Dorsolateral prefrontal cortex (tissue), 120 donors: ENCODE measurements at regions of chr7 and their contacts with region 1.

Region 1: GRCh38 chr7:34823640-34824258 is 165.7 kb downstream of the NPSR1 start:
- DNase-seq: peak in 9 of 10 donors; percentile 38 to 70 (median 60)
- H3K4me3 ChIP-seq: no peak overlapping the region
- H3K27ac ChIP-seq: no peak overlapping the region
- H3K27me3 ChIP-seq: no peaks in the 10 kb centered on the region
- CTCF ChIP-seq: peak; percentile 73 to 97 (median 90)

Region 2: DNA sequence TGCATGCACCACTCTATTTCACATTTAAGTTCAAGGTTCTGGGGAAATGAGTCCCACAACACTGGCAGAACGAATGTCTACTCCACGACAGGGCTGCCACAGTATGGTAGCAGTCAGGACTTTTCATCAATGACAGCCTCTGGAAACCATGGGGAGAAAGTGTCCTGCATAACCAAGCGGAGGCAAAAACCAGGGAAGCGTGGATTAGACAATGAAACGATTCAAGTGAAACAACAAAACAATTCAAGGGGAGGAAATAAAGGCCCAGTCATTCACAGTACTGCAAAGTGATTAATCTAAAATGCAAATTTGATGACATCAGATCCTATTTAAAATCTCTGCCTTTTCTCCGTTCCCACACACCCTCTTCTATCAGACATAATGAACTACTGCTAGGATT is 45.3 kb after region 1 on chr7:
- intact Hi-C with region 1: loop called in 1 of 2 experiments (anchors 2 kb)
- DNase-seq: peak in 4 of 10 donors; percentile 26 to 63 (median 50)
- H3K4me3 ChIP-seq: no peak overlapping the region
- H3K27ac ChIP-seq: peak overlapping the region in 47 of 59 donors; percentile 18 to 91 (median 74)
- H3K27me3 ChIP-seq: no peaks in the 10 kb centered on the region
- CTCF ChIP-seq: peak in 15 of 56 donors; percentile 14 to 46 (median 20)

Region 3: DNA sequence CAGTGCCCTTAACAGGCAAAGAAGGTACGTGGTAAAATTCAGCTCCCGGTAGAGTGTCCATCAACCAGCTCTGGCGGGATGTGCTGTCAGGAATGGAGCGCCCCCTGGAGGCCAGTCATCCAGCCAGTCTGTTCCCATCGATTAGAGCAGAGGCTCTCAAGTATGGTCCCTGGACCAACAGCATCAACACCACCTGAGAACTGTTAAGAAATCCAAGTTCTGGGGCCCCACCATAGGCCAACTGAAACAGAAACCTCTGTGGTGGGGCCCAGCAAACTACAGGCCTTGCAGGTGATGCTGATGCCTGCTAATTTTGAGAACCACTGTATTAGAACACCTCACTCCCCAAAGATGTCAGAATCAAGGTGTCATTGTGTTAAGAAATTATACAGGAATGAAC is 104.3 kb after region 1 on chr7:
- intact Hi-C with region 1: loop called (anchors 2 to 5 kb)
- DNase-seq: peak; percentile 25 to 91 (median 76)
- H3K4me3 ChIP-seq: peak overlapping the region in 1 of 59 donors; percentile 27
- H3K27ac ChIP-seq: no peak overlapping the region
- H3K27me3 ChIP-seq: no peaks in the 10 kb centered on the region
- CTCF ChIP-seq: peak in 55 of 56 donors; percentile 43 to 93 (median 77)